ENCODE measurements at regions of chr12 and their contacts with region 1.

Region 1: GRCh38 chr12:51531978-51532497 is 59.0 kb upstream of the SCN8A start:
- DNase-seq: no peak
- H3K4me3 ChIP-seq: no peak overlapping the region
- H3K27ac ChIP-seq: no peak overlapping the region
- H3K4me1 ChIP-seq: peaks cover 0 to 8% (median 0%) of the 10 kb centered on the region in 3 donors
- H3K27me3 ChIP-seq: peaks cover 0 to 60% (median 0%) of the 10 kb centered on the region in 4 donors
- CTCF ChIP-seq: peak; percentile 74 to 89 (median 84)
- POLR2A ChIP-seq: no peak

Region 2: GRCh38 chr12:51424662-51425438 is 107.2 kb before region 1 on chr12 and contains the start of gene SLC4A8:
- intact Hi-C with region 1: loop called (anchors 5 kb)
- DNase-seq: no peak
- H3K4me3 ChIP-seq: peak within 1 kb of the TSS; percentile 18 to 70 (median 48)
- H3K27ac ChIP-seq: no peak within 1 kb of the TSS
- H3K4me1 ChIP-seq: peaks cover 10 to 13% (median 11%) of the 10 kb centered on the region in 3 donors
- H3K27me3 ChIP-seq: peaks cover 0 to 73% (median 2%) of the 10 kb centered on the region in 4 donors
- CTCF ChIP-seq: peak in 5 of 6 experiments; percentile 47 to 69 (median 63)
- POLR2A ChIP-seq: no peak
- total RNA-seq, gene SLC4A8: 0.04 to 0.22 (median 0.15) TPM

Region 3: GRCh38 chr12:51814311-51815088 is 282.5 kb after region 1 on chr12:
- intact Hi-C with region 1: loop called (anchors 10 kb)
- DNase-seq: no peak
- H3K4me3 ChIP-seq: peak overlapping the region; percentile 39 to 66 (median 53)
- H3K27ac ChIP-seq: peak overlapping the region; percentile 48 to 82 (median 68)
- H3K4me1 ChIP-seq: peaks cover 5 to 21% (median 8%) of the 10 kb centered on the region in 3 donors
- H3K27me3 ChIP-seq: peaks cover 0 to 63% (median 0%) of the 10 kb centered on the region in 4 donors
- CTCF ChIP-seq: peak; percentile 17 to 84 (median 67)
- POLR2A ChIP-seq: peak in 2 of 4 donors; percentile 15 to 28

Measured in esophagus squamous epithelium (tissue), 5 donors.